OCI-LY7 (cell line): ENCODE measurements at regions of chr9 and their contacts with region 1.

Region 1: DNA sequence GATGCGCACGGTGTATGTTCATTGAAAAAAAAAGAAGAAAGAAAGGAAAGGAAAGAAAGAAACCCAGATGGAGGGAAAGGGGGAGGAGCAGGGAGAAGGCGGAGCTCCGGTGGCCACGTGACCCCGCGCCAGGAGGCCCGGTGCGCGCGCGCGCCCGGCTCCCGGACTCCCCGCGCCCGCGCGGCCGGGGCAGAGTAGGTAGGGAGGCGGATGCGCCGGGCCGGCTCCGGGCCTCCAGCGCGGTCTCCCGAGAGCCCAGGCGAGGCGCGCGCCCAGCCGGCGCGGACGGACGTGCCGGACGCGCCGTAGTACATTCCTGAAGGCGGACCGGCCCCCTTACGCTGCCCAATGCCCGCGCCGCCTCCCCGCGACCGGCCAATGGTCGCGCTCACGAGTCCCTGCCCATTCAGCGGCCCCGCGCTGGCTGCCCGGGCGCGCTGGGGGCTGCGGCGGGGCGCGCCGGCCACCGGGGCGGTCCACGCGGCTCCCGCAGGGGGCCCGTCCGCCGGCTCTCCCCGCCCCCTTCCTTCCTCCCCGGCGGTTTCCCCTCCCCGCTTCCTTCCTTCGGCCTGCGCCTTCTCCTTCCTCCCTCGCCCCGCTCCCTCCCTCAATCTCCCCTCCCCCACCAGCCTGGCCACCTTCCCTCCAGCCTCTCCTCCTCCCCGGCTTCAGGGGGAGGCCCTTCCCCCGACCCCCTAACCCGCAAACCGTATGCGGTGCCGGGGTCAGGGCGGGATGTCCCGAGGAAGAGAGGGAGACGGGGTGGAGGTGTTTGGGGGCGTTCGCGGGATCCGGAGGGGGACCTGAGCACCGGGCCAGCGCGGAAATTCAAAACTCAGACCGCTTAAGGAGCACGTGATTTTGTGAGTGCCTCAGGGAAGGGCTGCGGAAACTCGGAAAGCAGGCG is 5.8 kb downstream of the PTCH1 start:
- DNase-seq: peak; percentile 91
- H3K4me3 ChIP-seq: peak overlapping the region; percentile 82
- H3K27ac ChIP-seq: peak overlapping the region; percentile 51
- H3K4me1 ChIP-seq: peaks cover 16% of the 10 kb centered on the region
- CTCF ChIP-seq: no peak

Region 2: GRCh38 chr9:95268681-95269080 is 242.3 kb before region 1 on chr9:
- CTCF ChIA-PET with region 1: no interaction called
- POLR2A ChIA-PET with region 1: no interaction called
- intact Hi-C with region 1: loop called (anchors 5 kb)
- DNase-seq: peak; percentile 24
- H3K4me3 ChIP-seq: no peak overlapping the region
- H3K27ac ChIP-seq: no peak overlapping the region
- H3K4me1 ChIP-seq: peaks cover 37% of the 10 kb centered on the region
- CTCF ChIP-seq: peak; percentile 64

Region 3: GRCh38 chr9:95379630-95380029 is 131.3 kb before region 1 on chr9:
- CTCF ChIA-PET with region 1: no interaction called
- POLR2A ChIA-PET with region 1: interaction called, 3 read pairs
- intact Hi-C with region 1: loop called (anchors 5 kb)
- DNase-seq: peak; percentile 45
- H3K4me3 ChIP-seq: no peak overlapping the region
- H3K27ac ChIP-seq: no peak overlapping the region
- H3K4me1 ChIP-seq: no peaks in the 10 kb centered on the region
- CTCF ChIP-seq: peak; percentile 67

Region 4: DNA sequence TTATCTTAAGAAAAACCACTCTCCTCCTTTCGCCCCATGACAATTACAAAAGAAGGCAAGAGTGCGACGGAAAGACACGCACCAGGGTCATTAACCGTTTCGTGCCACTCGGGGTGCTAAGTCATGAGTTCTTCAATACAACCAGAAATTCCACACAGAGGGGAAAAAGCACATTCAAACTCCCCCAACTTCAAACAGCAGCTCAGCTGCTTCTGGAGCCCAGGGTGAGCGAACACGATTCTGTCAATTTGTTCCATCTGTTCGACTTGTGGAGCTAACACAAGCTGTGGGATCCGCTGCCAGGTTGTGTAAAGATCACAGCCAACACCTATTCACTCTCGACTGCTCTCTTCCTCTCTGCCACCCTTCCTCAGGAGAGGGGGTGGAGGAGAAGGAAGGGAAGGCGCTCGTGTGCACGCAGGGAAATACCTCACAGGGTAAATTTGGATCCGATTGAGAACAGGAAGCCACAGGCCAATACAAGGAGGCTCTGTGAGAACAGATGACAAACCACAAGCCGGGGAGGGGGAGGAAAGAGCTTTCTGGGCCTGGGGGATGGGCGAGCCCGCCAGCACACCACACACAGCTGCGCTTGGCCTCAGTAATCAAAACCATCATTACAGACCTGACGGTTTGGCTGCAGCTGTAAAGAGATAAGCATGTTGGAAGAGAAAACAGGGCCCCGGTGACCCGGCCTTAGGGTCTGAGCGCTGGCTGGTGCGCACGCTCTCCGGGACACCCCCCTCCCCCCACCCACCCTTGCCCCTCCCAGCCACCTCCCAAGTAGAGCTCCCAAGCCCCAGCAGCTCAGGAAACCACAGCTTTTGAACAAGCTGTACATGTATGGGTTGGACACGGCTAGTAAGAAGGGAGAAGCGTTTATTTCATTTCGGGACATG is 48.5 kb before region 1 on chr9:
- CTCF ChIA-PET with region 1: interaction called, 5 read pairs
- POLR2A ChIA-PET with region 1: interaction called, 6 read pairs
- intact Hi-C with region 1: loop called (anchors 1 kb)
- DNase-seq: peak; percentile 97
- H3K4me3 ChIP-seq: peak overlapping the region; percentile 65
- H3K27ac ChIP-seq: peak overlapping the region; percentile 100
- H3K4me1 ChIP-seq: peaks cover 48% of the 10 kb centered on the region
- CTCF ChIP-seq: no peak

Region 5: GRCh38 chr9:95726756-95727155 is 215.8 kb after region 1 on chr9:
- CTCF ChIA-PET with region 1: no interaction called
- POLR2A ChIA-PET with region 1: no interaction called
- intact Hi-C with region 1: no loop called
- DNase-seq: peak; percentile 35
- H3K4me3 ChIP-seq: no peak overlapping the region
- H3K27ac ChIP-seq: no peak overlapping the region
- H3K4me1 ChIP-seq: peaks cover 12% of the 10 kb centered on the region
- CTCF ChIP-seq: peak; percentile 81

Region 6: GRCh38 chr9:95875305-95876137 is 364.6 kb after region 1 on chr9 and contains the start of gene ERCC6L2:
- CTCF ChIA-PET with region 1: no interaction called
- POLR2A ChIA-PET with region 1: interaction called, 5 read pairs
- intact Hi-C with region 1: loop called (anchors 5 kb)
- DNase-seq: peak; percentile 97
- H3K4me3 ChIP-seq: no peak within 1 kb of the TSS
- H3K27ac ChIP-seq: no peak within 1 kb of the TSS
- H3K4me1 ChIP-seq: peaks cover 8% of the 10 kb centered on the region
- CTCF ChIP-seq: no peak
- total RNA-seq, gene ERCC6L2: 34.9 and 41.0 TPM in 2 replicates